CD8-positive, alpha-beta T cell (primary cell): ENCODE measurements at regions of chr7 and their contacts with region 1.

Region 1: GRCh38 chr7:130912862-130913631 is 179.0 kb upstream of the KLF14 start:
- DNase-seq: peak; percentile 54 to 94 (median 79)
- ATAC-seq: peak; percentile 82
- H3K4me3 ChIP-seq: peak overlapping the region; percentile 65 to 82
- H3K4me3 Mint-ChIP-seq: peak overlapping the region; percentile 92
- H3K27ac ChIP-seq: peak overlapping the region; percentile 84 to 88
- H3K27ac Mint-ChIP-seq: peak overlapping the region; percentile 90
- H3K4me1 ChIP-seq: peaks cover 68% of the 10 kb centered on the region
- H3K4me1 Mint-ChIP-seq: peaks cover 90% of the 10 kb centered on the region
- H3K27me3 ChIP-seq: no peaks in the 10 kb centered on the region
- H3K27me3 Mint-ChIP-seq: no peaks in the 10 kb centered on the region
- CTCF ChIP-seq: no peak

Region 2: GRCh38 chr7:130929896-130930659 is 17.0 kb after region 1 on chr7:
- CTCF ChIA-PET with region 1: no interaction called
- POLR2A ChIA-PET with region 1: no interaction called
- intact Hi-C with region 1: loop called in 1 of 2 experiments (anchors 1 kb)
- DNase-seq: peak in 2 of 9 experiments; percentile 42 to 59
- ATAC-seq: peak; percentile 43
- H3K4me3 ChIP-seq: no peak overlapping the region
- H3K4me3 Mint-ChIP-seq: no peak overlapping the region
- H3K27ac ChIP-seq: peak overlapping the region in 1 of 2 experiments; percentile 40
- H3K27ac Mint-ChIP-seq: peak overlapping the region; percentile 67
- H3K4me1 ChIP-seq: peaks cover 46% of the 10 kb centered on the region
- H3K4me1 Mint-ChIP-seq: peaks cover 89% of the 10 kb centered on the region
- H3K27me3 ChIP-seq: no peaks in the 10 kb centered on the region
- H3K27me3 Mint-ChIP-seq: no peaks in the 10 kb centered on the region
- CTCF ChIP-seq: no peak

Region 3: DNA sequence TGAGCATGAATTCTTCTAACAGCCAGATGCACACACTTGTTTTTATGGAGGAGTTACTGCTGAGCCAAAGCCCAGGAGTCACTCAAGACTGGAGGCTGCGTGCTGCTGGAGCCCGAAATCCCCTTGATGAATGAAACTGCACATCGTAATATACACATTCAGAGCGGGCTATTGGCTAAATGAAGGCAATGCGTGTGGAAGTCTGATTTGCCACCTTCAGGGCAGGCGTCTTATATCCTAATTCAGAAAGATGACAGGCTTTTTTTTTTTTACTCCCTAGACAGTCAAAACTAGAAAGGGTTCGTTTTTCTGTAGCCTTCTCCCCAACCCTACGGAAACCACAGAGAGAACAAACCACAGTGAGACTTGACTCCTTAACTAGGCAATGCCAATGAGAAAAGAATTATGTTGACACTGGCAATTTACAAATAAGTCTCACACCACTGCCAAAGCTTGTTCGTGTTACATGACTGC is 48.1 kb after region 1 on chr7:
- CTCF ChIA-PET with region 1: interaction called, 3 read pairs
- POLR2A ChIA-PET with region 1: interaction called, 3 read pairs
- intact Hi-C with region 1: loop called (anchors 2 kb)
- DNase-seq: peak in 7 of 9 experiments; percentile 35 to 94 (median 54)
- ATAC-seq: peak; percentile 73
- H3K4me3 ChIP-seq: peak overlapping the region; percentile 34 to 35
- H3K4me3 Mint-ChIP-seq: peak overlapping the region; percentile 83
- H3K27ac ChIP-seq: peak overlapping the region; percentile 63 to 72
- H3K27ac Mint-ChIP-seq: peak overlapping the region; percentile 92
- H3K4me1 ChIP-seq: peaks cover 67% of the 10 kb centered on the region
- H3K4me1 Mint-ChIP-seq: peaks cover 63% of the 10 kb centered on the region
- H3K27me3 ChIP-seq: no peaks in the 10 kb centered on the region
- H3K27me3 Mint-ChIP-seq: no peaks in the 10 kb centered on the region
- CTCF ChIP-seq: no peak

Region 4: GRCh38 chr7:131007394-131008330 is 94.6 kb after region 1 on chr7:
- CTCF ChIA-PET with region 1: interaction called, 4 read pairs
- POLR2A ChIA-PET with region 1: no interaction called
- intact Hi-C with region 1: loop called in 1 of 2 experiments (anchors 5 kb)
- DNase-seq: peak in 7 of 9 experiments; percentile 30 to 83 (median 51)
- ATAC-seq: peak; percentile 39
- H3K4me3 ChIP-seq: no peak overlapping the region
- H3K4me3 Mint-ChIP-seq: peak overlapping the region; percentile 53
- H3K27ac ChIP-seq: peak overlapping the region; percentile 3 to 73
- H3K27ac Mint-ChIP-seq: peak overlapping the region; percentile 60
- H3K4me1 ChIP-seq: peaks cover 62% of the 10 kb centered on the region
- H3K4me1 Mint-ChIP-seq: peaks cover 85% of the 10 kb centered on the region
- H3K27me3 ChIP-seq: no peaks in the 10 kb centered on the region
- H3K27me3 Mint-ChIP-seq: no peaks in the 10 kb centered on the region
- CTCF ChIP-seq: peak; percentile 50

Region 5: DNA sequence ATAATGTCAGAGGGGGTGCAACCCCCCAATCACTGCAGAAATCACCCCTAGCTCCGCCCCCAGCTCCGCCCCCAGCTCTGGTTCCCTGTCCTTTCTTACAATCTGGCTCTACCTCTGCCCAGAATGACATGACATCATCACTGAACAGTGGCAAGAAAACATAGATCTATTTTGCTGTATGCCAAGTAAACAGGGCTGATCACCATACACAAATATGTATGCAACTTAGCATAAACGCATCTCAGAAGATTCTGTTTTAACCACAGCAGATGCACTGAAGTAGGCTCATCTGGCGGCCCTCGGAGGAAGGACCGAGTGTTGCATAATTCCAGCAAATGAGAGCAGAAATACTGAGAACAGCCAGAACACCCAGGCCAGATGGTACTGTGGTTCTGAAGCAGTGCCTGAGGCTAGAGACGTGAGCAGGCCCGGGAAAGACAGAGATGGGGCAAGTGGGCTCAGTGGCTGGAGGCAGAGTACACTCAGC is 114.3 kb after region 1 on chr7:
- CTCF ChIA-PET with region 1: interaction called, 4 read pairs
- POLR2A ChIA-PET with region 1: no interaction called
- intact Hi-C with region 1: loop called in 1 of 2 experiments (anchors 5 kb)
- DNase-seq: peak in 4 of 9 experiments; percentile 60 to 69 (median 64)
- ATAC-seq: peak; percentile 50
- H3K4me3 ChIP-seq: no peak overlapping the region
- H3K4me3 Mint-ChIP-seq: no peak overlapping the region
- H3K27ac ChIP-seq: peak overlapping the region in 1 of 2 experiments; percentile 46
- H3K27ac Mint-ChIP-seq: peak overlapping the region; percentile 55
- H3K4me1 ChIP-seq: peaks cover 54% of the 10 kb centered on the region
- H3K4me1 Mint-ChIP-seq: peaks cover 87% of the 10 kb centered on the region
- H3K27me3 ChIP-seq: no peaks in the 10 kb centered on the region
- H3K27me3 Mint-ChIP-seq: no peaks in the 10 kb centered on the region
- CTCF ChIP-seq: no peak

Region 6: DNA sequence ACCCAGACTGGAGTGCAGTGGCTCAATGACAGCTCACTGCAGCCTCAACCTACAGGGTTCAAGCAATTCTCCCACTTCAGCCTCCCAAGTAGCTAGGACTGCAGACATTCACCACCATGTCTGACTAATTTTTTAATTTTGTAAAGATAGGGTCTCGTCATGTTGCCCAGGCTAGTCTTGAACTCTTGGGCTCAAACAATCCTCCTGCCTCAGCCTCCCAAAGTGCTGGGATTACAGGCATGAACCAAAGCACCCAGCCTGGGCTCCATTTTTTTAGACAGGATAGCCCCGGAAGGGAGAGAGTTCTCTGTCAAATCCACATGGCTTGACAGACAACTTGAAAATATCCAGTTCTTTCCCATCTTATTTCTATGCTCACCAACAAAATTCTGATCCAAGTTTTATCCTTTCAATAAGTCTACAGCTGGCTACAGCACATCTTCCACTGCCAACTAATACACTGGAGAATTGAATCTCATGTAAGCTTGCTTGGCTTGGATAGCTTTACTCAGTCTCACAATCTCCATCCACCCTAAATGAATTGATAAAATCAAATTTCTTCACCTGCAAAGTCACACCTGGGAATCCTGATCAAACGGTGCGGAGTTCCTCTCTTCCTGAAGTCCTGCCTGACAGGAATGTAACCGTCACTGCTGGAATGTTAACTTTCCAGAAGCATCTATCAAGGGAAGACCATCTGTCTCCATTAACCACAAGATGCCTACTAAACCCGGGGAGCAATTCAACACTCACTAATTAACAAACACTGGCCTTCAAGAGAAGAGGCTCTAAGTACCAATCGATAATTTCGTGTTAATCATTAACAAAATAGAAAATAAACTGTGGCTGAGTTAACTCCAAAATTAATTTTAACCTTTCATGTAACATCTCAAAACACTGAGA is 175.0 kb after region 1 on chr7:
- CTCF ChIA-PET with region 1: no interaction called
- POLR2A ChIA-PET with region 1: no interaction called
- intact Hi-C with region 1: no loop called
- DNase-seq: no peak
- ATAC-seq: no peak
- H3K4me3 ChIP-seq: no peak overlapping the region
- H3K4me3 Mint-ChIP-seq: no peak overlapping the region
- H3K27ac ChIP-seq: no peak overlapping the region
- H3K27ac Mint-ChIP-seq: peak overlapping the region; percentile 32
- H3K4me1 ChIP-seq: peaks cover 53% of the 10 kb centered on the region
- H3K4me1 Mint-ChIP-seq: peaks cover 85% of the 10 kb centered on the region
- H3K27me3 ChIP-seq: no peaks in the 10 kb centered on the region
- H3K27me3 Mint-ChIP-seq: no peaks in the 10 kb centered on the region
- CTCF ChIP-seq: no peak

Region 7: GRCh38 chr7:131327626-131328376 is 414.8 kb after region 1 on chr7 and contains the start of gene MKLN1:
- CTCF ChIA-PET with region 1: no interaction called
- POLR2A ChIA-PET with region 1: no interaction called
- intact Hi-C with region 1: loop called in 1 of 2 experiments (anchors 5 kb)
- DNase-seq: peak; percentile 75 to 94 (median 89)
- ATAC-seq: peak; percentile 94
- H3K4me3 ChIP-seq: peak within 1 kb of the TSS; percentile 95 to 100
- H3K4me3 Mint-ChIP-seq: peak within 1 kb of the TSS; percentile 92
- H3K27ac ChIP-seq: peak within 1 kb of the TSS; percentile 85 to 95
- H3K27ac Mint-ChIP-seq: peak within 1 kb of the TSS; percentile 97
- H3K4me1 ChIP-seq: peaks cover 33% of the 10 kb centered on the region
- H3K4me1 Mint-ChIP-seq: peaks cover 68% of the 10 kb centered on the region
- H3K27me3 ChIP-seq: no peaks in the 10 kb centered on the region
- H3K27me3 Mint-ChIP-seq: no peaks in the 10 kb centered on the region
- CTCF ChIP-seq: no peak
- total RNA-seq, gene MKLN1: 43.2 to 54.5 TPM